ENCODE measurements at regions of chr7 and their contacts with region 1.

Region 1: GRCh38 chr7:87152107-87152844 is at the start of gene DMTF1:
- DNase-seq: peak; percentile 91
- H3K4me3 Mint-ChIP-seq: peak within 1 kb of the TSS; percentile 84
- H3K27ac Mint-ChIP-seq: peak within 1 kb of the TSS; percentile 98
- H3K4me1 Mint-ChIP-seq: peaks cover 39% of the 10 kb centered on the region
- H3K27me3 Mint-ChIP-seq: no peaks in the 10 kb centered on the region
- total RNA-seq, gene DMTF1: 43.6 to 49.8 TPM

Region 2: DNA sequence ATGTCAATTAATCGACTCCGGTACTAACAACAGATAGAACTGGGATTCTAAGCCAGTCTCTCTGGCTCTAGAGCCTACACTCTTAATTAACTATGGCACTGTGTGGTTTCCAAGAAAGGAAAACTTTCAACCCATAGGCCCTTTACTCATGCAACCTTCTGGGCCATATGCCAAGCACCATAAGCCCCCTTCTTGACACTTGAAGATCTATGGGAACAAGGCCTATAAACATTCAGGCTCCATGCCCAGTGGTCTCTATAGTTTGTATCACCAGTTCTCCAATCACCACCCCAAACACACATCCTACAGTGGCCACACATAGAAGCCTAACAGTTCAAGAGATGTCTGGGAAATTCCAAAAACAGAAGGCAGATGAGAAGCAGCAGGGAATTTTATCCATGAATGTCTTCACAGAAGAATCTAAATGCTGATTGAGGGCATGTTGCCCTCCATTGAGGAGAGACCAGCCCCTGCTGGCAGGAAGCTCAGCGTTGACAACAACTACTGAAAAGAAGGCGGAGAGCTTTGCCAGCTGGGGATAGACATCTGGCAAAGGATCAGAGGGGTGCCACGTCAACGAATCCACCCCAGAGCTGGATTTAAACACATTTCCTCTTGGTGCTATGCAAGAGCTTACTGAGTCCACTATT is 444.1 kb before region 1 on chr7:
- CTCF ChIA-PET with region 1: no interaction called
- intact Hi-C with region 1: no loop called
- DNase-seq: no peak
- H3K4me3 Mint-ChIP-seq: no peak overlapping the region
- H3K27ac Mint-ChIP-seq: no peak overlapping the region
- H3K4me1 Mint-ChIP-seq: no peaks in the 10 kb centered on the region
- H3K27me3 Mint-ChIP-seq: no peaks in the 10 kb centered on the region

Region 3: DNA sequence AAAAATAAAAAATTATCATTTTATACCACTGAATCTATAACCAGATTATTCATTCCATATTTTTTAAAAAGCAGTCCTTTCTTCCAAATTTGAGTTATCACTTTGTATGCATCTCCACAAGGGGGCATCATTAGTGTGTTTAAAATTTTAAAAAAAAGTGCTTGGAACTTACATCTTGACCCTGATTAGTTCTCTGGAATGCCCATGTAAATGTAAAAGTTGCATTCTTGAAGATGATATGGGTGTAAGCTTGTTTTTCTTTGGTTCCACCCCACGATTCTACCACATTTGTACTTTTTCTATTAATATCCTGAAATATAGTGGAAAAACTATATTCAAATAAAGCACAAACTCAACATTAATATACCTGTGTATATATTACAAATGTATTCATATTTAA is 237.7 kb before region 1 on chr7:
- CTCF ChIA-PET with region 1: interaction called, 9 read pairs
- intact Hi-C with region 1: loop called (anchors 1 kb)
- DNase-seq: no peak
- H3K4me3 Mint-ChIP-seq: no peak overlapping the region
- H3K27ac Mint-ChIP-seq: no peak overlapping the region
- H3K4me1 Mint-ChIP-seq: peaks cover 5% of the 10 kb centered on the region
- H3K27me3 Mint-ChIP-seq: no peaks in the 10 kb centered on the region

Region 4: DNA sequence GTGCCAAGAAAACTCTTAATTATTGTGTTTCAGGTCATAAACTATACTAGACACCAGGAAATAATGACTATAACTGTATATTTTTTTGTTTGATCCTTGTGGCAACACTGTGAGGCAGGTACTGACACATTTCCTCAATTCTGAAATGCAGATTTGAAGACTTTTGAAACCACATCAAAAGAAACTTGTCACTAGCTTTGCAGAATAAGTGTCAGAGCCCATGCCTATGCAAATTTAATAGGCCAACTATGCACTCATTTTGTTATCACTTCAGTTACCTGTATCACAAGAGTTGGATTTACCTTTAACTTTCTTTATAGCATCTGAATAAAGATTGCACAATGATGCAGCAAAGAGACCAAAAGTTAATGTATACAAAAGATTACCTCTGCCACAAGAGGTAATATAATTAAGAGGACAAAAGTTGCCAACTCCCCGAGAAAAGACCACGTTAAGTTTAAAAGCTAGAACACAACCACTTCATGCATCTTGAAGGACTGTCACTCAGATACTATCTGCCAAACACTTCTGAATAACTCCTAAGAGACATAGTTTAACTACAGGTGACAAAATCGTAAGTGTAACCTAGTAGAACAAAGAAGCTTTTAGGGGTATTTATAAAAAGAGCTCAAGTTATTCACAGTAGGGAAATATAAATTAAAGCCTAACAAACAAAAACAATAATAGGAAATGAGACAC is 173.3 kb before region 1 on chr7:
- CTCF ChIA-PET with region 1: interaction called, 3 read pairs
- intact Hi-C with region 1: loop called (anchors 1 kb)
- DNase-seq: peak; percentile 13
- H3K4me3 Mint-ChIP-seq: no peak overlapping the region
- H3K27ac Mint-ChIP-seq: peak overlapping the region; percentile 19
- H3K4me1 Mint-ChIP-seq: peaks cover 33% of the 10 kb centered on the region
- H3K27me3 Mint-ChIP-seq: no peaks in the 10 kb centered on the region

Region 5: GRCh38 chr7:87173471-87173870 is 21.2 kb after region 1 on chr7:
- CTCF ChIA-PET with region 1: interaction called, 4 read pairs
- intact Hi-C with region 1: loop called (anchors 2 kb)
- DNase-seq: no peak
- H3K4me3 Mint-ChIP-seq: no peak overlapping the region
- H3K27ac Mint-ChIP-seq: peak overlapping the region; percentile 39
- H3K4me1 Mint-ChIP-seq: peaks cover 24% of the 10 kb centered on the region
- H3K27me3 Mint-ChIP-seq: no peaks in the 10 kb centered on the region

Region 6: GRCh38 chr7:87370660-87371180 is 218.4 kb after region 1 on chr7:
- CTCF ChIA-PET with region 1: no interaction called
- intact Hi-C with region 1: no loop called
- DNase-seq: no peak
- H3K4me3 Mint-ChIP-seq: no peak overlapping the region
- H3K27ac Mint-ChIP-seq: no peak overlapping the region
- H3K4me1 Mint-ChIP-seq: peaks cover 4% of the 10 kb centered on the region
- H3K27me3 Mint-ChIP-seq: no peaks in the 10 kb centered on the region

Region 7: GRCh38 chr7:87416682-87417587 is 264.7 kb after region 1 on chr7:
- CTCF ChIA-PET with region 1: interaction called, 5 read pairs
- intact Hi-C with region 1: loop called (anchors 2 kb)
- DNase-seq: peak; percentile 85
- H3K4me3 Mint-ChIP-seq: no peak overlapping the region
- H3K27ac Mint-ChIP-seq: no peak overlapping the region
- H3K4me1 Mint-ChIP-seq: no peaks in the 10 kb centered on the region
- H3K27me3 Mint-ChIP-seq: no peaks in the 10 kb centered on the region

Region 8: DNA sequence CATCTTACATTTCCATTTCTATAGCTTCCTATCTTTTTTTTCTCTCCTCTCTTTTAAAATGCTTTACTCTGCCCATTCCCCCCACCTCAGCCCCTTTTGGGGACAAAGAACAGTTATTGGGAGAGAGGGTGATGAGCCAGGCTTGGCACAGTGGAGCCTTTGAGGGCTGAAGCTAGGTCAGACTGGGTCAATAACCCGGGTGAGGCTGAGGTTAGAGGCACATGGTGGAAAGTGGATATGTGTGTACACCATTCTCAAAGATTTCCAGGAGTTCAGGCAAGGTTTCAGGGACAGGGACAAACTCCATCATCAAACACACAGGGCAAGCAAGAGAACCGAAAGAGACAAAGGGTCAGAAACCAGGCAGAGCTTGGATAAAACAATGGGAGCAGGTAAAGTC is 311.7 kb after region 1 on chr7:
- CTCF ChIA-PET with region 1: no interaction called
- intact Hi-C with region 1: no loop called
- DNase-seq: no peak
- H3K4me3 Mint-ChIP-seq: no peak overlapping the region
- H3K27ac Mint-ChIP-seq: no peak overlapping the region
- H3K4me1 Mint-ChIP-seq: no peaks in the 10 kb centered on the region
- H3K27me3 Mint-ChIP-seq: peaks cover 24% of the 10 kb centered on the region

Region 9: DNA sequence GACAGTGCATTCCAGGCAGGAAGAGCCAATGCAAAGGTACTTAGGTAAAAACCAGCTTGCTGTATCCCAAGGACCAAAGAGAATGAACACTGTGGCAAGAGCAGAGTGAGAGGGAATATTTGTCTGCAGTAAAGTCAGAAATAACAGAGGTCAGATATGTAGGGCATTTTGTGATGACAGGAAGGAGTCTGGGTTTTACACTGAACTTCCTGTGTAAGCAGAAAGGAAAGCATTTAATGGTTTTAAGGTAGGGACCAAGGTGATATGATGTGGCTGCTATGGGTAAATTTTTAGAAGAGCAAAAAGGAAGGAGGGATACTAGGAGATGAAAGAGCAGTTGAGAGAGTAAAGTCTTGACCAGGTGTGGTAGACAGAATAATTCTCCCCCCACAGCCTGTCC is 438.3 kb after region 1 on chr7:
- CTCF ChIA-PET with region 1: no interaction called
- intact Hi-C with region 1: no loop called
- DNase-seq: no peak
- H3K4me3 Mint-ChIP-seq: no peak overlapping the region
- H3K27ac Mint-ChIP-seq: no peak overlapping the region
- H3K4me1 Mint-ChIP-seq: peaks cover 7% of the 10 kb centered on the region
- H3K27me3 Mint-ChIP-seq: no peaks in the 10 kb centered on the region

Region 10: DNA sequence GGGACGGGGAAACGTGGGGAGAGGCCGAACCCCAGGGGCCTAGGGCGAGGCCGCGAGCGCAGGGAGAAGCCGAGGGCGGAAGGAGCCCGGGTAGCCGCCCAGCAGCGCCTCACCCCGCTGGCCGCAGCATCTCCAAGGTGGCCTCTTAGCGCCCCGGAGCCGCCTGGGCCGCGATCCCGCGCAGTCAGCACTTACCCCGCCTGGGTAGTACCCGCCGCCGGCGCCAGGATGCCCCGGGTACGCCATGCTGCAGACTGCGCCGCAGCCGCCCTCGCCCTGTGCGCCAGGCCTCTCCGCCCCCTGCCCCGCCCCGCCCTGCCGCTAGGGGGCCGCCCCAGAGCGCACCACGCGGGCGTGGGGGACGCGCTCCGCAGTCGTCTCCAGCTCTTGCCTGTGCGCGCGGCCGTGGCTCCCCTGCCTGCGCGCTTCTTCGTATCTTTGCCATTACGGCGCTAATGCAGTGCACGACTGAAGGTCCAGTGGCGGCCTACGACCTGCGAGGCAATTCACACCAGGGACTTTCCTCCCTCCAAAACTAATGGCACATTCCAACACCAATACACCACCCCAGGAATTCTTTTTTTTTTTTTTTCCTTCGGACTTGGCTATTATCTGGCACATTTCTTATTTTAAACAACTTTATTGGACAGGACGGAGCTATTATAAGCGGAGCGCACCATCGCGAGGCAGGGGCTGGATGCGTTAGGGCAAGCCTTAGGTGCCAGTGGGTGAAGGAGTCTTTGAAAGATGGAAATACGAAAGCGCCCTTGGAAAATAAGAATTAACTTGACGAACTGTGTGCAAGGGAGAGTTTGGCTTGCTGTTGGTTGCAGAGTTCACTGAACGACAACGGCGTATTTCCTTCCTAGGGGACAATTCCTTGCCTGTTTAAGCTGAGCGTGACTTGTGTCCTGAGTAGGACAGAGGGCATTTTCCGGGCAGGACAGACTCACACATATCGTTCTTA is 1067.8 kb after region 1 on chr7 and contains the start of gene SRI:
- CTCF ChIA-PET with region 1: no interaction called
- intact Hi-C with region 1: loop called (anchors 2 kb)
- DNase-seq: peak; percentile 89
- H3K4me3 Mint-ChIP-seq: peak within 1 kb of the TSS; percentile 89
- H3K27ac Mint-ChIP-seq: peak within 1 kb of the TSS; percentile 88
- H3K4me1 Mint-ChIP-seq: peaks cover 23% of the 10 kb centered on the region
- H3K27me3 Mint-ChIP-seq: no peaks in the 10 kb centered on the region
- total RNA-seq, gene SRI: 152 to 168 TPM

Measured in activated naive CD4-positive, alpha-beta T cell treated with anti-CD3 and anti-CD28 coated beads for 36 hours (primary cell).